Panc1 (cell line): ENCODE measurements at regions of chr20 and their contacts with region 1.

Region 1: DNA sequence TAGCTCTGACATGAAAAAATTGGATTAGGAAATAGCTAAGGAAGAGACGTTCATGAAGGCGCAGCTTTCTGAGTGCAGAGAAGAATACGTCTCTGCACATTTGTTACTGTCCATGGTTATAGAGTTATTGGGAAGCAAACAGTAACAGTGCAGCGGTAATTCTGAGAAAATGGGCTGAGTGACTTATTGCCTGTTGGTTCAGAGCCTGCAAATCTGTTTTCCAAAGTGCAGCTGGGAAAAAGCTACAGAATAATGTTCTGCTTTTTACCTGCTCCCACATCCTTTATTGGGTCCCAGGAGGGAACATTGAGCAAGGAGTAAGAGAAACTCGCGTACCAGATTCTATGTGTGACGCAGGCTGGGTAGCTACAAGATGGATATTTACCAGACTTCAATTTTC is 160.2 kb downstream of the BTBD3 start:
- DNase-seq: no peak
- ATAC-seq: no peak
- H3K4me3 ChIP-seq: no peak overlapping the region
- H3K27ac ChIP-seq: no peak overlapping the region
- H3K4me1 ChIP-seq: no peaks in the 10 kb centered on the region
- H3K27me3 ChIP-seq: no peaks in the 10 kb centered on the region
- CTCF ChIP-seq: no peak

Region 2: DNA sequence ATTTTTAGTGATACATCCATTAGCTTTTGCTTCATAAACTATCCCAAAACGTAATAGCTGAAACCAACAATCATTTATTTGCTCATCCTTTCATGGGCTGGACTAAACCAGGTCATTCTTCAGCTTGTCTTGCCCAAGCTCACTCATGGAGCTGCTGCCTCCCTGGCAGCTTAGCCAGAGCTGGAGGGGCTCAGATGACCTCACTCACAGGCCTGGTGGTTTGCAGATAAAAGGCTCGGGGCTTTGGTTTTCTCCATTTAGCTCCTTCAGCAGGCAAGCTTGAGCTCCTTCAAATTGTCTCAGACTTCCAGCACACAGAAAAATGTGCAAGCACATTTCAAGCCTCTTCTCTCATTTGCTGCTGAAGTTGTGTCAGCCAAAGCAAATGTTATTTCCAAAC is 21.0 kb before region 1 on chr20:
- CTCF ChIA-PET with region 1: interaction called, 13 read pairs
- POLR2A ChIA-PET with region 1: no interaction called
- in situ Hi-C with region 1: no loop called
- intact Hi-C with region 1: no loop called
- DNase-seq: no peak
- ATAC-seq: no peak
- H3K4me3 ChIP-seq: no peak overlapping the region
- H3K27ac ChIP-seq: no peak overlapping the region
- H3K4me1 ChIP-seq: no peaks in the 10 kb centered on the region
- H3K27me3 ChIP-seq: no peaks in the 10 kb centered on the region
- CTCF ChIP-seq: no peak

Region 3: GRCh38 chr20:12849225-12849910 is 771.5 kb after region 1 on chr20:
- CTCF ChIA-PET with region 1: no interaction called
- POLR2A ChIA-PET with region 1: no interaction called
- in situ Hi-C with region 1: no loop called
- intact Hi-C with region 1: no loop called
- DNase-seq: no peak
- ATAC-seq: no peak
- H3K4me3 ChIP-seq: no peak overlapping the region
- H3K27ac ChIP-seq: no peak overlapping the region
- H3K4me1 ChIP-seq: no peaks in the 10 kb centered on the region
- H3K27me3 ChIP-seq: no peaks in the 10 kb centered on the region
- CTCF ChIP-seq: no peak